ENCODE measurements at regions of chr2 and their contacts with region 1.

Region 1: GRCh38 chr2:127701193-127701650 is at the start of gene SFT2D3:
- DNase-seq: peak; percentile 78 to 96 (median 86)
- ATAC-seq: peak; percentile 92
- H3K4me3 ChIP-seq: peak within 1 kb of the TSS; percentile 83
- H3K27ac ChIP-seq: peak within 1 kb of the TSS; percentile 95
- H3K4me1 ChIP-seq: peaks cover 18 to 26% of the 10 kb centered on the region in 2 experiments
- H3K27me3 ChIP-seq: no peaks in the 10 kb centered on the region
- CTCF ChIP-seq: no peak
- EP300 ChIP-seq: no peak
- POLR2A ChIP-seq: peak; percentile 97
- RAD21 ChIP-seq: no peak
- polyA plus RNA-seq, gene SFT2D3: not detected

Region 2: GRCh38 chr2:127591221-127591923 is 109.8 kb before region 1 on chr2:
- CTCF ChIA-PET with region 1: no interaction called
- POLR2A ChIA-PET with region 1: interaction called, 3 read pairs
- in situ Hi-C with region 1: no loop called
- intact Hi-C with region 1: loop called (anchors 2 kb)
- DNase-seq: peak; percentile 73 to 84 (median 78)
- ATAC-seq: peak; percentile 98
- H3K4me3 ChIP-seq: no peak overlapping the region
- H3K27ac ChIP-seq: no peak overlapping the region
- H3K4me1 ChIP-seq: peaks cover 0 to 9% of the 10 kb centered on the region in 2 experiments; a peak in 1 of 5 replicates
- H3K27me3 ChIP-seq: peaks cover 5 to 28% of the 10 kb centered on the region in 2 experiments; a peak in 4 of 5 replicates
- CTCF ChIP-seq: peak; percentile 96 to 97 (median 97)
- EP300 ChIP-seq: no peak
- POLR2A ChIP-seq: no peak
- RAD21 ChIP-seq: peak; percentile 75 to 94

Region 3: GRCh38 chr2:127810619-127811396 is 109.6 kb after region 1 on chr2 and contains the start of gene WDR33:
- CTCF ChIA-PET with region 1: no interaction called
- POLR2A ChIA-PET with region 1: interaction called, 3 read pairs
- in situ Hi-C with region 1: no loop called
- intact Hi-C with region 1: loop called (anchors 2 kb)
- DNase-seq: peak; percentile 96 to 97 (median 96)
- ATAC-seq: peak; percentile 98
- H3K4me3 ChIP-seq: peak within 1 kb of the TSS; percentile 89
- H3K27ac ChIP-seq: peak within 1 kb of the TSS; percentile 96
- H3K4me1 ChIP-seq: peaks cover 5 to 12% of the 10 kb centered on the region in 2 experiments; a peak in 4 of 5 replicates
- H3K27me3 ChIP-seq: no peaks in the 10 kb centered on the region
- CTCF ChIP-seq: peak; percentile 19 to 39 (median 21); a peak in 2 of 6 replicates
- EP300 ChIP-seq: no peak
- POLR2A ChIP-seq: peak; percentile 98
- RAD21 ChIP-seq: peak in 1 of 2 experiments; percentile 44; a peak in 2 of 4 replicates
- polyA plus RNA-seq, gene WDR33: 38.4 to 43.5 TPM

Region 4: DNA sequence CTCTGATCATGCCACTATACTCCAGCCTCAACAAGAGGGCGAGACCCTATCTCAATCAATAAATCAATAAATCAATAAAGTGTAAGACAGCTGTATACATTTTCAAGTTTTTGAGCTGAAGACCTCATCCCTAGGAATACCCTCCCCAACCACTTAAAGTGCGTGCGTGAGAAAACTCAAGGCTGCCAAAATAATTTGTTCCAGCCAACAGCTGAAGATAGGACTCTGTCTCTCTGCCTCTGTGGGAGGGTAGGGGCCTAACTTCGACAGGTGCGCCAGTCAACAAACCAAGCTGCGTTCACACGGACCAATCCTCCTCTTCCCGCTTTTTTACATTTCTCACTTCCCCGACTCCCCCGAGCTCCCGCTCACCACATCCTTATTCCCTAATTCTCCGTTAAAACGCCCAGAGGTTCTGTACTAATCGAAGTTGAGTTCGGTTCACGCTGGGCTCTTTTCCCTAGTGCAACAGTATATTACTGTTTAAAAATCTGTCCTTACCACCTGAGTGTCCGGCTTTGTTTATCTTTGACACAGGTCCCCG is 156.1 kb after region 1 on chr2:
- CTCF ChIA-PET with region 1: no interaction called
- POLR2A ChIA-PET with region 1: no interaction called
- in situ Hi-C with region 1: no loop called
- intact Hi-C with region 1: no loop called
- DNase-seq: peak in 2 of 4 experiments; percentile 34 to 43
- ATAC-seq: peak; percentile 31
- H3K4me3 ChIP-seq: peak overlapping the region; percentile 70
- H3K27ac ChIP-seq: peak overlapping the region; percentile 85
- H3K4me1 ChIP-seq: peaks cover 28 to 29% of the 10 kb centered on the region in 2 experiments
- H3K27me3 ChIP-seq: no peaks in the 10 kb centered on the region
- CTCF ChIP-seq: no peak
- EP300 ChIP-seq: no peak
- POLR2A ChIP-seq: no peak
- RAD21 ChIP-seq: no peak

Region 5: DNA sequence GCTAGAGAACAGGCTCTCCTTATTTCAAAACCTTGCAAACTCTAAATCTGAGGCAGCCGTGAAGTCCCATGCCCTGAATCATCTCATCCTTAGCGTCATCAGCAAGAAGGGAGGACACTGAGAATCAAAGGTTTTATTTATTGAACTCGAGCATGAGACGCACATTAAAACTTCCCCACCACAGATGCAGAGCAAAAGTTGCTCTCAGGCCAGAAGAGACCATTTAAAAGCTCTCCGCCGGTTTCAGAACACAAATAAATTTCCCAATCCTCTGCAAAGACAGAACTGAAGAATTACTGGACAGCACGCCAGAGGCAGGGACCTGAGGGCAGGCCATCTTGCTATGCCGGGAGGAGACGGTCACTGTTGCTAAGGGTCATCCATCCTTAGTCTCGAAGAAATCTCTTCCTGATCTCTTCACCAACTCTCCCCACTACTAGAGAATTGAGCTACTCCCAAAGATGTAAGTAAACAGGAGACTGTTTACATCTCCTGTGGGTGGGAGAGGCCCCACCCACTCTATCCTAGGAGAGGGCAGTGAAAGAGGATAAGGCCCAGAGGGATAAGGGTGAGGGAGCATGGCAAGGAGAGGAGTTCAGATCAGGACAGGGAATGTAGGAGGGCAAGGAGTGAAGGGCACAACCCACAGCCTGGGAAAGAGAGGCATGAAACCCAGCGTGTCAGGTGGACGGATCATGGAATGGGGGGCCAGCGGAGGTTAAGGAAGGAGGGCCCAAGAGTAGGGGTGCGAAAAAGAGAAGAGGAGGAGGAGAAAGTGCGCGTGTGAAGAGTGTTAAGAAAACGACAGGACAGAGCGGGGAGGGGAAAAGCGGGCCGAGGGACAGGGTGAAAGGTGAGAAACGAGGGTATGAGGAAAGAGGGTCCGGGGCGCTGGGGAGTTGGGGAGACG is 183.5 kb after region 1 on chr2:
- CTCF ChIA-PET with region 1: no interaction called
- POLR2A ChIA-PET with region 1: no interaction called
- in situ Hi-C with region 1: no loop called
- intact Hi-C with region 1: no loop called
- DNase-seq: peak in 2 of 4 experiments; percentile 21 to 36
- ATAC-seq: no peak
- H3K4me3 ChIP-seq: peak overlapping the region; percentile 48
- H3K27ac ChIP-seq: peak overlapping the region; percentile 36; the same call in 1 of the 3 replicates
- H3K4me1 ChIP-seq: peaks cover 6 to 13% of the 10 kb centered on the region in 2 experiments; a peak in 3 of 5 replicates
- H3K27me3 ChIP-seq: no peaks in the 10 kb centered on the region
- CTCF ChIP-seq: no peak
- EP300 ChIP-seq: no peak
- POLR2A ChIP-seq: no peak
- RAD21 ChIP-seq: no peak